A549 (cell line): ENCODE measurements at regions of chr15 and their contacts with region 1.

Region 1: DNA sequence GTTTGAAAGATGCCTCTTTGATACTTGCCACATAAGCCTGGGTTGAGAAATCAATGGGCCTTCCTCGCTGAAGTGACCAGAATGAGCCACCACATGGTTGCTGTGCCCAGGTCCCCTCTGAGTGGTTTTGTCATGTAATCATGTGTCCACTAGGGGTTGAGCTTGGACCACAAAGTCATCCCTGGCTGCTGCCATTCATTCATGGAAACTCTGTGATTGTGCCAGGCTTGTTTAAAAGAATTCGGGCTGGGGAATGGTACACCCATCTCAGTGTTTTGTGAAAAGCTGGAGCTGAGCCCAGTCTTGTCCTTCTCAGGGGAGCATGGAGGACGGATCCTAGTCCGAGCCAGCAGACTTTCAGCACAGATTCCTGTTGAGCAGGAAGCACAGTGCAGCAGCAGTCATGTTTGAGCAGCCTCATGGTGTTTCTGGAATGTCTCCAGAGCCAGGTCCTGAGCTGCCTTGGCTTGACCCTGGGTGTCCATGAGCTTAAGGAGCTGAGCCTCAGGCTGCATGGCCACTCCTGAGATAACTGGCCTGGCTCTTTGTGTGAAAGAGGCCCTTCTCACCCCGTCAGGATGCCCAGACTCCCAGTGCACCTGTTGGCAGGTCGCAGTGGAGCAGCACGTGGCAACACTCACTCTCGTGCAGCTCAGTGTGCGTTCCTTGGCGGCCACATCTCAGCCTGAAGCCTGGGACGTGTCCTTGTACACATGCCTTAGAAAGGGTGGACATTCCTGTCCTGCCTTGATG is 260.3 kb upstream of the TPM1 start:
- DNase-seq: peak; percentile 81 to 90
- ATAC-seq: peak; percentile 93 to 95
- H3K4me3 ChIP-seq: no peak overlapping the region
- H3K27ac ChIP-seq: peak overlapping the region; percentile 71 to 82
- H3K4me1 ChIP-seq: peaks cover 42% of the 10 kb centered on the region
- CTCF ChIP-seq: peak; percentile 98
- EP300 ChIP-seq: no peak
- POLR2A ChIP-seq: no peak
- RAD21 ChIP-seq: peak; percentile 100

Region 2: GRCh38 chr15:62344806-62345539 is 437.2 kb before region 1 on chr15:
- CTCF ChIA-PET with region 1: no interaction called
- POLR2A ChIA-PET with region 1: no interaction called
- DNase-seq: peak; percentile 88 to 91
- ATAC-seq: peak; percentile 94 to 99
- H3K4me3 ChIP-seq: peak overlapping the region; percentile 10; the same call in 2 of the 3 replicates
- H3K27ac ChIP-seq: peak overlapping the region; percentile 6 to 58; a peak in 2 of 6 replicates
- H3K4me1 ChIP-seq: no peaks in the 10 kb centered on the region
- CTCF ChIP-seq: peak; percentile 88
- EP300 ChIP-seq: no peak
- POLR2A ChIP-seq: no peak
- RAD21 ChIP-seq: peak; percentile 65 to 80

Region 3: GRCh38 chr15:62792986-62793751 is 11.0 kb after region 1 on chr15:
- CTCF ChIA-PET with region 1: interaction called, 49 read pairs
- POLR2A ChIA-PET with region 1: no interaction called
- DNase-seq: no peak
- ATAC-seq: peak in 1 of 2 experiments; percentile 23; a peak in 1 of 6 replicates
- H3K4me3 ChIP-seq: no peak overlapping the region
- H3K27ac ChIP-seq: peak overlapping the region in 1 of 2 experiments; percentile 56; a peak in 3 of 6 replicates
- H3K4me1 ChIP-seq: peaks cover 2% of the 10 kb centered on the region; the same call in 1 of the 3 replicates
- CTCF ChIP-seq: no peak
- EP300 ChIP-seq: no peak
- POLR2A ChIP-seq: no peak
- RAD21 ChIP-seq: no peak

Region 4: DNA sequence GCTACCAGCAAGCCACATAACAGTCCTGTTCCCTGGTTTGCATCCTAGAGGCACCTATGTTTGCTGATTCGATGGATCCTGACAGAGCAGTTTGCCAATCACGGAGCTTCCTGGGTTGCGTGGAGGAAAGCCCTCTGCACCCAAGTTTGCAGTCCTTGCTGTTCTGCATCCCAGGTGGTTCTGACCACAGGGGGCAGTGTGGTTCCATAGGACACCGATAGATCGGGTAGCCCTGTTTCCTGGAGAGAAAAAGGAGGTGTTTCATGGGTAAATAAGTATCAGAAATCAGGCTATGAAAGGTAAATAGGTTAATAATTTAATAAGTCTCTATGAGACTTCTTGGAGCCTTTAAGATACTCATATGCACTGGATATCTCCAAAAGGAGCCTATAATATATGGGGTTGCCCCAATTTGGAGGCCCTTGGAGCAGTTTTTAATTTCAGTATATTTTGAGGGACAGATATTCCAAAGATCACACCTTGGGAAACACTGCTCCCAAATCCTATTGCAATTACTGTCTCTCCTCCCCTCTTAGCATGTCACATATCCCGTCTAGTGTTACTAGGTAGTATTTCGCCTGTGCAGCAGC is 65.8 kb after region 1 on chr15:
- CTCF ChIA-PET with region 1: interaction called, 58 read pairs
- POLR2A ChIA-PET with region 1: interaction called, 5 read pairs
- DNase-seq: peak; percentile 79 to 89
- ATAC-seq: peak in 1 of 2 experiments; percentile 58; a peak in 3 of 6 replicates
- H3K4me3 ChIP-seq: no peak overlapping the region
- H3K27ac ChIP-seq: peak overlapping the region; percentile 91
- H3K4me1 ChIP-seq: peaks cover 77% of the 10 kb centered on the region
- CTCF ChIP-seq: peak; percentile 70
- EP300 ChIP-seq: no peak
- POLR2A ChIP-seq: no peak
- RAD21 ChIP-seq: peak; percentile 84 to 93

Region 5: GRCh38 chr15:62857411-62857853 is 75.2 kb after region 1 on chr15:
- CTCF ChIA-PET with region 1: interaction called, 12 read pairs
- POLR2A ChIA-PET with region 1: no interaction called
- DNase-seq: peak; percentile 23 to 47
- ATAC-seq: peak; percentile 35 to 46; a peak in 3 of 6 replicates
- H3K4me3 ChIP-seq: no peak overlapping the region
- H3K27ac ChIP-seq: peak overlapping the region; percentile 50 to 85
- H3K4me1 ChIP-seq: peaks cover 43% of the 10 kb centered on the region
- CTCF ChIP-seq: no peak
- EP300 ChIP-seq: no peak
- POLR2A ChIP-seq: no peak
- RAD21 ChIP-seq: no peak

Region 6: DNA sequence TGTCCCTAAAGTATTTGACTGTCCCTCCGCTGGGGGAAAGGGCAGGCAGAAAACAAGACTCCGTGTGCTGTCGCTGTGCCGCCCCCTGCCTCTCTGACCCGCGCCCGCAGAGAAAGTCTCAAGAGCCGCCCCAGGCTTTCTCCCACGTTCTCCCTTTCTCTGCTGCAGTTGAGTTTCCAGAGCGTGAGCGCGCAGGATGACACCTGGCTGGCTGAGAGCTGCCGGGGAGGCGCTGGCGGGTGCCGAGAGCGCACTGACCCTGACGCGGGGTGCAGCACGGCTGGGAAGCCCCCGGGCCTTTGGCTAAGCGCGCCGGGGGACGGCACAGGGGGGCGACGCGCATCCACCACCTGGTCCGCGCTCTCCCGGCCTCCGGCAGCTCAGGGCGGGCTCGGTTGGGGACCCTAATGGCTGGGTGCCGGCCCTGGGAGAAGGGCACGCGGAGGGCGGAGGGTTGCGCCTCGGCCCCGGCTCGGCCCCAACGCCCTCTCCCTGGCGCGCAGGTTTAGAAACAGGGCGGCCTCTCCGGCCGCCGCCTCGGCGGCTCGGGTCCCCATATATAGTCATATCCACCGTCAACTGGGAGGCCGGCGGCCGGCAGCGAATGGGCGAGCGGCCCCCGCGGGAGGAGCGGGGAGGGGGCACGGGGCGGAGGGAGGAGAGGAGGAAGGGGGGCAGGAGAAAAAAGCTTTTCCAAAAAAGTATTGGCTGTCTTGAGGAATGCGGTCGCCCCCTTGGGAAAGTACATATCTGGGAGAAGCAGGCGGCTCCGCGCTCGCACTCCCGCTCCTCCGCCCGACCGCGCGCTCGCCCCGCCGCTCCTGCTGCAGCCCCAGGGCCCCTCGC is 260.0 kb after region 1 on chr15 and contains the start of gene TPM1:
- CTCF ChIA-PET with region 1: interaction called, 86 read pairs
- POLR2A ChIA-PET with region 1: interaction called, 22 read pairs
- DNase-seq: peak; percentile 92 to 95
- ATAC-seq: peak; percentile 76 to 84
- H3K4me3 ChIP-seq: peak within 1 kb of the TSS; percentile 87
- H3K27ac ChIP-seq: peak within 1 kb of the TSS; percentile 94 to 97
- H3K4me1 ChIP-seq: peaks cover 41% of the 10 kb centered on the region
- CTCF ChIP-seq: peak; percentile 13; the same call in 2 of the 3 replicates
- EP300 ChIP-seq: no peak
- POLR2A ChIP-seq: peak; percentile 94
- RAD21 ChIP-seq: peak; percentile 39 to 68
- polyA plus RNA-seq, gene TPM1: 777 and 894 TPM in 2 replicates